ENCODE measurements at regions of chr14 and their contacts with region 1.

Region 1: DNA sequence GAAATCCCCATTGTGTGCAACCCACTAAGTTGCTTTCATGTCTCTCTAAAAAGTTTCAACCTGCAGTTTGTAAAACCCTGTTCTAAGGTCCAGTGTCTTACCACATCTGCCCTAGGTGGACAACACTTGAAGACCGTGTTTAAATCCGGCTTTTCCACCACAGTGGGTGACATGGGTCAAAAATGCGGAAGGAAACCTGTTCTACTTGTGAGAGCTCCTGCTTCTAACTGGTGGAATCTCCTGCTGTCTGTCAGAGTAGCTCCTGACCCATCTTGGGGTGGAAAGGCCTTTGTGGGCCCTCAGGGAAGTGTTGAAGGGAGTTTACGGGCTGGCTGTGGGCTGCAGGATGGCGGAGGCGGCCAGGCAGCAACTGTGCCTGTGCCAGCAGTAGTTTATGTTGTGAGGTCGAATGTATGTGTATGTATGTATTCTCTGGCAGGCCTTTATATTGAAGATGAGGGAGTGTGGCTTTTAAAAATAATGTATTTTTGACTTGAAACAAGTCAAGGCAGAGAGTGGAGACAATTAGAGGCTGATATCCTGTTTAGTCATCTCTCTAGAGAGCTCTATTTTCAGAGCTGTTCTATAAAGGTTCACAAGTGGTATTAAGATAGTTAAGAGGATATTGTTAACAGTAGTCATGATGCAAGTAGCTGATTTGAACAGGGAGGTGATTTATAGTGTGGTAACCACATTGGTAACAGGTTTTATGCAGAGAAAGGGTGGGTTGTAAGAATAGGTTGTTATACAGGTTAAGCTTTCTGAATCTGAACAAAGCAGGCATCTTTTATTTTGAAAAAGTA is 67.0 kb downstream of the PRKCH start:
- DNase-seq: peak; percentile 41
- H3K4me3 Mint-ChIP-seq: no peak overlapping the region
- H3K27ac Mint-ChIP-seq: no peak overlapping the region
- H3K4me1 Mint-ChIP-seq: peaks cover 14% of the 10 kb centered on the region
- H3K27me3 Mint-ChIP-seq: no peaks in the 10 kb centered on the region

Region 2: GRCh38 chr14:61403411-61403810 is 15.0 kb after region 1 on chr14:
- CTCF ChIA-PET with region 1: interaction called, 11 read pairs
- POLR2A ChIA-PET with region 1: interaction called, 3 read pairs
- DNase-seq: peak; percentile 65
- H3K4me3 Mint-ChIP-seq: peak overlapping the region; percentile 55
- H3K27ac Mint-ChIP-seq: peak overlapping the region; percentile 88
- H3K4me1 Mint-ChIP-seq: peaks cover 84% of the 10 kb centered on the region
- H3K27me3 Mint-ChIP-seq: no peaks in the 10 kb centered on the region

Region 3: GRCh38 chr14:61420326-61420725 is 32.0 kb after region 1 on chr14:
- CTCF ChIA-PET with region 1: no interaction called
- POLR2A ChIA-PET with region 1: no interaction called
- DNase-seq: no peak
- H3K4me3 Mint-ChIP-seq: no peak overlapping the region
- H3K27ac Mint-ChIP-seq: peak overlapping the region; percentile 28
- H3K4me1 Mint-ChIP-seq: peaks cover 24% of the 10 kb centered on the region
- H3K27me3 Mint-ChIP-seq: no peaks in the 10 kb centered on the region

Region 4: GRCh38 chr14:61454545-61454944 is 66.2 kb after region 1 on chr14:
- CTCF ChIA-PET with region 1: no interaction called
- POLR2A ChIA-PET with region 1: interaction called, 16 read pairs
- DNase-seq: no peak
- H3K4me3 Mint-ChIP-seq: peak overlapping the region; percentile 43
- H3K27ac Mint-ChIP-seq: peak overlapping the region; percentile 90
- H3K4me1 Mint-ChIP-seq: peaks cover 92% of the 10 kb centered on the region
- H3K27me3 Mint-ChIP-seq: no peaks in the 10 kb centered on the region

Measured in activated CD4-positive, alpha-beta T cell treated with anti-CD3 and anti-CD28 coated beads, Interleukin-2, amount 10 ng/mL, durations not matched to agents 7 days and 5 days (primary cell).